CD14-positive monocyte (primary cell): ENCODE measurements at regions of chr2 and their contacts with region 1.

Region 1: GRCh38 chr2:65081232-65081685 is 25.0 kb downstream of the CEP68 start:
- DNase-seq: peak; percentile 63 to 66 (median 64)
- H3K4me3 ChIP-seq: no peak overlapping the region
- H3K4me3 Mint-ChIP-seq: no peak overlapping the region
- H3K27ac ChIP-seq: peak overlapping the region; percentile 17 to 58
- H3K27ac Mint-ChIP-seq: peak overlapping the region; percentile 56 to 89 (median 83)
- H3K4me1 ChIP-seq: peaks cover 9 to 15% of the 10 kb centered on the region in 2 donors
- H3K4me1 Mint-ChIP-seq: peaks cover 23% of the 10 kb centered on the region
- H3K27me3 ChIP-seq: no peaks in the 10 kb centered on the region
- H3K27me3 Mint-ChIP-seq: peaks cover 0 to 3% (median 0%) of the 10 kb centered on the region in 3 donors
- CTCF ChIP-seq: no peak

Region 2: GRCh38 chr2:64523666-64524603 is 557.3 kb before region 1 on chr2 and contains the start of gene AFTPH:
- intact Hi-C with region 1: no loop called
- DNase-seq: peak; percentile 98 to 99 (median 99)
- H3K4me3 ChIP-seq: peak within 1 kb of the TSS; percentile 72 to 95 (median 81)
- H3K4me3 Mint-ChIP-seq: peak within 1 kb of the TSS; percentile 98 to 99
- H3K27ac ChIP-seq: peak within 1 kb of the TSS; percentile 93 to 98
- H3K27ac Mint-ChIP-seq: peak within 1 kb of the TSS; percentile 98 to 100 (median 100)
- H3K4me1 ChIP-seq: peaks cover 29 to 44% of the 10 kb centered on the region in 2 donors
- H3K4me1 Mint-ChIP-seq: peaks cover 33% of the 10 kb centered on the region
- H3K27me3 ChIP-seq: no peaks in the 10 kb centered on the region
- H3K27me3 Mint-ChIP-seq: peaks cover 0 to 1% (median 0%) of the 10 kb centered on the region in 3 donors
- CTCF ChIP-seq: no peak
- polyA plus RNA-seq, gene AFTPH: 22.3 to 28.6 (median 28.4) TPM

Region 3: DNA sequence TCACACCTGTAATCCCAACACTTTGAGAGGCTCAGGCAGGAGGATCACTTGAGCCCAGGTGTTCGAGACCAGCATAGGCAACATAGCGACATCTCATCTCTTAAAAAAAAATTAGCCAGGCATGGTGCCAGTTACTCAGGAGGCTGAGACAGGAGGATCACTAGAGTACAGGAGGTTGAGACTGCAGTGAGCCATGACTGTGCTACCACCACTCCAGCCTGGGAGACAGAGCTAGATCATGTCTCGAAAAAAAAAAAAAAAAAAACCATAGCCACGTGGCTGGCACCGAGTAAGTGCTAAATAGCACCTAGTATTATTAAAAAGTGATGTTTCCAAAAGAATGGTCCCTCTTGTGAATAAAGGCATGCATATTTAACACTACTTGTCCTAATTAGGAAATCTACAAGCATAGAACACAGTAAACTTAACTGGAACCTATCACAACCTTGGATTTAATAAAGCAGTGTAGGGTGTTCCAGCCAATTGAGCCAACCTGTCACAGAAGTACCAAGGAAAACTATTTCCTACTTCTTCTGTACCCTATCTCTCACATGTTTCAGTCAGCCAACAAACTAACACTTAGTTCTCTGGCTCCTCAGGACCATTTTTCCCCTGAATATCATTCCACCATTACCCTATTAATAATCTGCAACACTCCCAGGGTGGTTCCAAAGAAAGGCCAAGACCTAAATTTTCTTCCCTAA is 39.9 kb after region 1 on chr2:
- intact Hi-C with region 1: loop called in 1 of 2 experiments (anchors 5 kb)
- DNase-seq: no peak
- H3K4me3 ChIP-seq: no peak overlapping the region
- H3K4me3 Mint-ChIP-seq: no peak overlapping the region
- H3K27ac ChIP-seq: no peak overlapping the region
- H3K27ac Mint-ChIP-seq: peak overlapping the region in 4 of 7 donors; percentile 3 to 58 (median 53)
- H3K4me1 ChIP-seq: peaks cover 21 to 42% of the 10 kb centered on the region in 2 donors
- H3K4me1 Mint-ChIP-seq: peaks cover 54% of the 10 kb centered on the region
- H3K27me3 ChIP-seq: no peaks in the 10 kb centered on the region
- H3K27me3 Mint-ChIP-seq: peaks cover 0 to 2% (median 0%) of the 10 kb centered on the region in 3 donors
- CTCF ChIP-seq: no peak